ENCODE measurements at regions of chr5 and their contacts with region 1.

Region 1: GRCh38 chr5:65203746-65204145 is 278.0 kb downstream of the ADAMTS6 start:
- DNase-seq: no peak
- ATAC-seq: no peak
- H3K4me3 ChIP-seq: no peak overlapping the region
- H3K27ac ChIP-seq: no peak overlapping the region
- H3K4me1 ChIP-seq: no peaks in the 10 kb centered on the region
- H3K27me3 ChIP-seq: no peaks in the 10 kb centered on the region
- CTCF ChIP-seq: no peak

Region 2: DNA sequence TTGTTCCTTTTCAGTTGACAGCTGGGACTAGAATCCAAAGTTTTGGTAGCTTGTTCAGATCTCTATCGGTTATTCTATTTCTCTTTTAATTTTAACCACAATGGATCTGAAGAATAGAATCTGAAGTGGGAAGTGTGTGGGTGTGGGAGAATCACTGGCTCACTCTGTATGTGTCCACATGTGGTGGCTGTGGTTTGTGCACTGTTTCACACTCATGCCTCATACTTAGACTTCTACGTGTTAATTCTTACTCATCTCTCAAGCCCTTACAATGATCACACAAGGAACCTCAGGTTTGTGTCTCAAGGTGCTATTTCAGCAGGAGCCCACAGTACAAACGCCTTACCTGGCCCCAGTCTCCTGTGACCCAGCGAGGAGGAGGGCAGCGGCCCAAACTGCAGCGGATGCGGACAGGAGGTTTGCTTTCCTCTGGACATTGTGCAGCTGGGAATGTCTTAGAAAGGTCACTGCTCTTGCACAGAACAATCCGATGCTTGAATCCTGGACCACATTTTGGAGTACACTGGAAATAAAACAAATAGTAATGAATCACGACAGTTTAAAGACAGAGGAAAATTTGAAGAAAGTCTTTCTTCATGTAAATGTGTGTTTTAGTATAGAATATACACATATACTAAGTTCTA is 31.1 kb before region 1 on chr5:
- intact Hi-C with region 1: loop called in 1 of 2 experiments (anchors 2 kb)
- DNase-seq: no peak
- ATAC-seq: no peak
- H3K4me3 ChIP-seq: no peak overlapping the region
- H3K27ac ChIP-seq: no peak overlapping the region
- H3K4me1 ChIP-seq: no peaks in the 10 kb centered on the region
- H3K27me3 ChIP-seq: no peaks in the 10 kb centered on the region
- CTCF ChIP-seq: no peak

Region 3: GRCh38 chr5:65229841-65230240 is 26.1 kb after region 1 on chr5:
- intact Hi-C with region 1: no loop called
- DNase-seq: no peak
- ATAC-seq: no peak
- H3K4me3 ChIP-seq: no peak overlapping the region
- H3K27ac ChIP-seq: no peak overlapping the region
- H3K4me1 ChIP-seq: no peaks in the 10 kb centered on the region
- H3K27me3 ChIP-seq: no peaks in the 10 kb centered on the region
- CTCF ChIP-seq: no peak